Activated CD4-positive, alpha-beta T cell treated with anti-CD3 and anti-CD28 coated beads for 36 hours (primary cell): ENCODE measurements at regions of chr9 and their contacts with region 1.

Region 1: DNA sequence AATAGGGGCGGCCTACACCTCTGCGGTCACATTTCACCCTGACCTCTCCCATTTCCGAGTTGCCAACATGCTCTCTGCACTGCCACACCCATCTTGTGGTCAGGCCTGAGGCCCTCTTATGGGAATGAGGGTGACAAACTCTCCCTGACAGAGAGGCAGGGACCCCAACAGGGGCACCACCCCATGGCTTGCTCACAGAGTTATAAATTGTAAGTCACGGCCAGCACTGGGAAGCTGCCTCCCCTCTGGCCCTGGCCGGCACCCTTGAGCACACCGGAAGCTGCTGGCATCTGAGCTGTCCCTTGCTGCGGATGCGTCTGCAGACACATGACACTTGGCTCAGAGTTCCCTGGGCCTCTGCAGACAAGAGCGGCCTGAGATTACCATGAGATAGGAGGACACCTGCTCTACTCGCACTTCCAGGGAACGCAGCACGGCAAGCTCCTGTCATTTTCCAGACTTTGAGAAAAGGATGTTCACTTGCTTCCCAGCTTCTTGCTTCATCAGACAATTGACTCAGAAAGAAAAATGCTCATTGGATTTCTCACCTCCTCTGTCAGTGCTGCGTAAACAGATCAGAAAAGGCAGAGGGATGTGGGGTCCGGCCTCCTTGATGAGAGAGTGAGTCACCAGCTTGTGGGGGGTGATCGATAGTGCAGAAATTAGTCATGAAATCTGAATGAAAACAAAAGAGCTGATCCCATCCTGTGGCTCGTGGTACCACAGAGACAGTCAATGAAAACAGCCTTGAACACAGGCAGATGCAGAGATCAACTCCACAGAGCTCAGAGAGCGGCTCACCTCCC is 269.8 kb downstream of the SYK start:
- DNase-seq: peak; percentile 88
- ATAC-seq: peak; percentile 97
- H3K4me3 Mint-ChIP-seq: peak overlapping the region; percentile 37
- H3K27ac Mint-ChIP-seq: peak overlapping the region; percentile 97
- H3K4me1 Mint-ChIP-seq: peaks cover 24% of the 10 kb centered on the region
- H3K27me3 Mint-ChIP-seq: peaks cover 7% of the 10 kb centered on the region

Region 2: GRCh38 chr9:90979138-90979551 is 92.2 kb before region 1 on chr9:
- CTCF ChIA-PET with region 1: no interaction called
- POLR2A ChIA-PET with region 1: no interaction called
- intact Hi-C with region 1: no loop called
- DNase-seq: no peak
- ATAC-seq: no peak
- H3K4me3 Mint-ChIP-seq: no peak overlapping the region
- H3K27ac Mint-ChIP-seq: no peak overlapping the region
- H3K4me1 Mint-ChIP-seq: peaks cover 8% of the 10 kb centered on the region
- H3K27me3 Mint-ChIP-seq: peaks cover 32% of the 10 kb centered on the region

Region 3: GRCh38 chr9:91036826-91037510 is 34.4 kb before region 1 on chr9:
- CTCF ChIA-PET with region 1: interaction called, 4 read pairs
- POLR2A ChIA-PET with region 1: no interaction called
- intact Hi-C with region 1: loop called in 1 of 2 experiments (anchors 1 kb)
- DNase-seq: peak; percentile 87
- ATAC-seq: peak; percentile 89
- H3K4me3 Mint-ChIP-seq: peak overlapping the region; percentile 19
- H3K27ac Mint-ChIP-seq: peak overlapping the region; percentile 86
- H3K4me1 Mint-ChIP-seq: peaks cover 52% of the 10 kb centered on the region
- H3K27me3 Mint-ChIP-seq: peaks cover 9% of the 10 kb centered on the region

Region 4: DNA sequence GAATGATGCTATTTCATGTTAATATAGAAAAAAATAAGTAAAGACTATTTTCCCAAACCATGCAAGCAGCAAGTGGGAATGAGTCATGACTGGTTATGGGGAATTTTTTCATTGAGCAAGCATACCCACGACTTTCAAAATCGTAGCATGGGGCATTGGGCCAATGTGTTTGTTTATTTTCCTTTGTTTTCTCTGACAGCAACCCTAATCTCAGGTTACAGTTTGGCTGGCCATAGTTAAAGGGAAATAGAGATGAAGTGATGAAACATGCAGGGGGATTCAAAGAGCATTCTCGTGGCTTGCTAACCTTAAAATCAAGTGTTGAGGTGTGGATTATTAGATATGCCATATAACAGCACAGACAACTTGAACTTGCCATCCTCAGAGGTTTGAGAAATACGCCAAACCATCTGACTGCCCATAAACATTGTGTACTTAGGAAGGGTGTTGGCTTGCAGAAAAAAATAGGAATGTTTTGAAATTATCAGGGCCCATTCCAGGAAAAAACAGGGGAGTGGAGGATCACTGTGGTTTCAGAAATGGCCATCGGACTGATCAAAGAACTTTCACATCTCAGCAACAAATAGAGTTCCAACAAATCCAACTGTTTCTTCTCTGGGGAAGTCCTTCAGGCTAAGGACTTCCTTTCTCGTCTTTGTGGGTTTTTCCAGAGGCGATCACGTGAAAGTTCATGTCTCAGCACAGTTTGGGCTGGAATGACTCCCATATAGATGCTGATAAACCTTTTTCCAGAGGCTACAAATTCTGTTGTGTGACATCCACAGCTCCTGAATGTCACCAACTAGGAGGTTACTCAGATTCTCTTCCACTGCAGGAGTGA is 10.7 kb before region 1 on chr9:
- CTCF ChIA-PET with region 1: interaction called, 7 read pairs
- POLR2A ChIA-PET with region 1: interaction called, 4 read pairs
- intact Hi-C with region 1: loop called in 1 of 2 experiments (anchors 1 kb)
- DNase-seq: no peak
- ATAC-seq: peak; percentile 55
- H3K4me3 Mint-ChIP-seq: no peak overlapping the region
- H3K27ac Mint-ChIP-seq: peak overlapping the region; percentile 83
- H3K4me1 Mint-ChIP-seq: peaks cover 48% of the 10 kb centered on the region
- H3K27me3 Mint-ChIP-seq: no peaks in the 10 kb centered on the region

Region 5: DNA sequence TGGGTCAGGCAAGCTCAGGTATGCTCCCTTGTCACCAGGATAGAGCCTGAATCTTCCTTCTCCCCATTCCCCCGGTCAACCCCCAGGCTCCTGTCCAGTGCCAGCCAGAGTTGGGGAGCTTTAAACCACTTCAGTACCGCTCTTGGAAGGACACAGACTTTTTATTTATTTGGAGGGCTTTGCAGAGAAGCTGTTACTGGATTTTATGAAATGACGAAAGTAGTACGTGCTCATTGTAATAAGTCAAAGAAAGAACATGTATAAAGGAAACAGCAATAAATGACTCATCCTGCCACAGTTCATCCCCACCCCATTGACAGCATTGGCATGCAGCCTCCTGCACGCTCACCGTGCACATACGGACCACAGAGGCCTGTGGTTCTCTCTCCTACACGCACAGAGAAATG is 60.0 kb after region 1 on chr9:
- CTCF ChIA-PET with region 1: no interaction called
- POLR2A ChIA-PET with region 1: interaction called, 3 read pairs
- intact Hi-C with region 1: loop called (anchors 1 to 2 kb)
- DNase-seq: peak; percentile 91
- ATAC-seq: peak; percentile 98
- H3K4me3 Mint-ChIP-seq: peak overlapping the region; percentile 3
- H3K27ac Mint-ChIP-seq: peak overlapping the region; percentile 94
- H3K4me1 Mint-ChIP-seq: peaks cover 29% of the 10 kb centered on the region
- H3K27me3 Mint-ChIP-seq: no peaks in the 10 kb centered on the region